Activated CD4-positive, alpha-beta T cell treated with anti-CD3 and anti-CD28 coated beads, Interleukin-2, amount 10 ng/mL, durations not matched to agents 7 days and 5 days (primary cell): ENCODE measurements at regions of chr1 and their contacts with region 1.

Region 1: GRCh38 chr1:206663832-206664652 is 20.7 kb upstream of the MAPKAPK2 start:
- DNase-seq: peak; percentile 78
- H3K4me3 Mint-ChIP-seq: no peak overlapping the region
- H3K27ac Mint-ChIP-seq: no peak overlapping the region
- H3K4me1 Mint-ChIP-seq: peaks cover 21% of the 10 kb centered on the region
- H3K27me3 Mint-ChIP-seq: peaks cover 26% of the 10 kb centered on the region

Region 2: DNA sequence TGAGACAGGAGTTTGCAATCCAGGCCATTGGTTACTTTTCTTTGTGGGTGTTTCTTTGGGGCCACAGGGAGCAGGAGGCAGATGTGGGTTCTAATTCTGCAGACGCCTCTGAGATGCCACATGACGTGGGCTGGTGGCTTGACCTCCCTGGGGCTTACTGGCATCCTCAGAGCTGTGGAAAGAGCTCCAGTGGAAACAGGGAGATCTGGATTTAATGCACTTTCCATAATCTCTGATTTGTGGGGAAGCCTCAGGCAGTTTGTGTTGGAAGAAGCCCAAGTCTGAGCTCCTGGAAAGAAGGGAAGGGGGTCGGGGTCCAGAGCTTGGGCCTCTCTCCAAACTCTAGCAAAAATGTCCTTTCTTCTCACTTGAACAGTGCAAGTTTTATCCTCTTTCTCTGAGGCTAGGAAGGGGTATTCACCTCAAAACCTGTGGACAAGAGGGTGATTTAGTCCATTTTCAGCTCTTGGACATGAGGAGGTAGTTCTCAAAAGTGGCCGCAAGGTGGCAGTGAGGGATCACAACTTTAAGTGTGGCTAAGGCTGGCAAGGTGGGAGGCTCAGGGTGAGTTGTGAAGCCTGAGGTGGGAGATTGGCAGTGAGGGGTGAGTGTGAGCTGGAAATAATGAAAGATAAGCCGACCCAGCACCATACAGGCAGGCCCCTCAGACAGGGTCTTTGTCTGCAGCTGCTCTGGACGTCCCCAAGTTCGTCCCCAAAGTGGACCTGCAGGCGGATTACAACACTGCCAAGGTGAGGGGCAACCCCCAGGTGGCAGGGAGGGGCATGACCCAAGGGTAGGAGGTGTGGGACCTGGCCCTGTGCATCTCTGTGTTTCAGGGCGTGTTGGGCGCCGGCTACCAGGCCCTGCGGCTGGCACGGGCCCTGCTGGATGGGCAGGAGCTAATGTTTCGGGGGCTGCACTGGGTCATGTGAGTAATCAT is 184.6 kb before region 1 on chr1:
- CTCF ChIA-PET with region 1: interaction called, 11 read pairs
- POLR2A ChIA-PET with region 1: no interaction called
- DNase-seq: peak; percentile 72
- H3K4me3 Mint-ChIP-seq: no peak overlapping the region
- H3K27ac Mint-ChIP-seq: peak overlapping the region; percentile 63
- H3K4me1 Mint-ChIP-seq: peaks cover 27% of the 10 kb centered on the region
- H3K27me3 Mint-ChIP-seq: no peaks in the 10 kb centered on the region

Region 3: DNA sequence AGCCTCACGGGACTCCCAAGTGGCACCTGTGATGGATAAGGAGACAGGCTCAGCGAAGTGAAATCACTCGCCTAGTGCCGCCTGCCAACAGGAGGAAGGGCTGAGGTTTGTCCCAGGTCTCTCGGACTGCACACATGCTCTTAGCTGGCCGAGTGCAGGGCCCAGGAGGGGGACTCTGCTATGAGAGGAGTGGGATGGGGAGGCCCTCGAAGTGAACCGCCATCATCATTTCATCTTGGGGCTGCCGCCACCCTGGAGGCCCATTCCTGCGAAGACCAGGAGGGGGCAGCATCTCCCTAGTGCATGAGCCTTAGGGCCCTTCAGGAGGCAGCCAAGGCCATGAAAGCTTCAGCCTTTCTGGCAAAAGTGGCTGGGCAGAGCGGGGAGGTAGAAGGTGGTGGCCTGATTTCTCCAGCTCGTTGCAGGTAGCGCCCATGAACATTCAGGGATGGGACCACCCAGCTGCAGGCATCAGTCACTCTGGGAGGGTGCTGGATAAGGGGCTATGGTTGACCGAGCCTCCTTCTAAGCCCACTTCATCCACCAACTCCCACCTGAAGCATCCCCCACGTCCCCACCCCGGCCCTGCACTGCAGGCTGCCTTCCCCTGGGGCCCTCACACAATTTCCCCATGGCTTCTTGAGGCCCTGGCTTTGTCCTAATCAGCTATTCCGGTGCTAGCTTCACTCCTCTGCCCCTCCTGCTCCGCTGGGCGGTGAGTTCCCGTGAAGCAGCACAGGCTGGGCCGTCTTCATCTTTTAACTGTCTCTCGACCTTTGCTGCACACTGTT is 173.9 kb before region 1 on chr1:
- CTCF ChIA-PET with region 1: interaction called, 11 read pairs
- POLR2A ChIA-PET with region 1: no interaction called
- DNase-seq: peak; percentile 74
- H3K4me3 Mint-ChIP-seq: no peak overlapping the region
- H3K27ac Mint-ChIP-seq: no peak overlapping the region
- H3K4me1 Mint-ChIP-seq: peaks cover 17% of the 10 kb centered on the region
- H3K27me3 Mint-ChIP-seq: no peaks in the 10 kb centered on the region

Region 4: GRCh38 chr1:206635080-206635977 is 28.7 kb before region 1 on chr1 and contains the start of gene DYRK3:
- CTCF ChIA-PET with region 1: interaction called, 45 read pairs
- POLR2A ChIA-PET with region 1: interaction called, 5 read pairs
- DNase-seq: peak; percentile 93
- H3K4me3 Mint-ChIP-seq: peak within 1 kb of the TSS; percentile 75
- H3K27ac Mint-ChIP-seq: peak within 1 kb of the TSS; percentile 89
- H3K4me1 Mint-ChIP-seq: peaks cover 23% of the 10 kb centered on the region
- H3K27me3 Mint-ChIP-seq: peaks cover 11% of the 10 kb centered on the region
- total RNA-seq, gene DYRK3: 4.0 to 4.3 TPM

Region 5: DNA sequence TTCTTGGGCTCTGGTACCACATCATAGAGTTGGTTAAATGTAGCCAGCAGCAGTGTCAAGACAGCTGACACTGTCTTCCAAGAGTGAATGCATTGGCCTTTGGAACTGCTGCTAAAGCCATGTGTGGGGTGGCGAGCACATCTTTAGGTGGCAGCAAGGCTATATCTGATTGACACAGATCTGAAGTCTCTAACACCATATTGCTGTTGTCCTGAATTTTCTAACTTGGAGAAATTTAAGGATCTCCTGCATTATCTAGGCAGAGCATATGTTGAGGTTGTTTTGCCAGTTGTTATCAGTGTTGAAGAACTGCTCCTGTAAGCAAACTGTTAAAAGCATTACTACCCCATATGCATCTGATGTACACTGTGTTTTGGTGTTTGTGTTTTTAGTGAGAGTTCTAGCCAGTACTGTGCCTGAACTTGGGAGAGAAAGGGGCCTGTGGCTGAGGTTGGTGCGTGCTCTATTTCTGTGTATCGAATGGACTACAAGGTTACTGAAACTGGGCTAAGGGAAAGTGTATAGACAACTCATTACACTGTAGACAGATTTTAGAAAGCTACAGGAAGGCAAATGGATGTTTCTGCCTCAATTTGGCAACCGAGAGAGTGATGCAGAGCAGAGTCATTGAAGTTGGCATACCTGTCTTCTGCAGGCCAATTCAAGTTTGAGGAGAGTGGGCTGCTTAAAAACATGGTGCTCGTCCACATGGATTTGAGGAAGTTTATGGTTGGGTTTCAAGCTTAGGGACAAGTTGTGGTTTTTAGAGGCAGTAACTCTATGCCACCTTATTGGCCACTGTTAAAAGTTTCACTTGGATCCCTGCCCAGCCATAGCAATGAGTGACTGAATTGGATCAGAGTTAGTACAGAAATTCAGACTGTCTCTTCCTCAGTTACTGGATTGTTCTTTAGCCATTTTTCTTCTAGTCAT is 11.8 kb before region 1 on chr1:
- CTCF ChIA-PET with region 1: interaction called, 19 read pairs
- POLR2A ChIA-PET with region 1: no interaction called
- DNase-seq: no peak
- H3K4me3 Mint-ChIP-seq: no peak overlapping the region
- H3K27ac Mint-ChIP-seq: no peak overlapping the region
- H3K4me1 Mint-ChIP-seq: no peaks in the 10 kb centered on the region
- H3K27me3 Mint-ChIP-seq: peaks cover under 1% of the 10 kb centered on the region

Region 6: GRCh38 chr1:206674745-206675175 is 10.7 kb after region 1 on chr1:
- CTCF ChIA-PET with region 1: interaction called, 40 read pairs
- POLR2A ChIA-PET with region 1: no interaction called
- DNase-seq: no peak
- H3K4me3 Mint-ChIP-seq: no peak overlapping the region
- H3K27ac Mint-ChIP-seq: peak overlapping the region; percentile 14
- H3K4me1 Mint-ChIP-seq: peaks cover 10% of the 10 kb centered on the region
- H3K27me3 Mint-ChIP-seq: peaks cover 6% of the 10 kb centered on the region

Region 7: DNA sequence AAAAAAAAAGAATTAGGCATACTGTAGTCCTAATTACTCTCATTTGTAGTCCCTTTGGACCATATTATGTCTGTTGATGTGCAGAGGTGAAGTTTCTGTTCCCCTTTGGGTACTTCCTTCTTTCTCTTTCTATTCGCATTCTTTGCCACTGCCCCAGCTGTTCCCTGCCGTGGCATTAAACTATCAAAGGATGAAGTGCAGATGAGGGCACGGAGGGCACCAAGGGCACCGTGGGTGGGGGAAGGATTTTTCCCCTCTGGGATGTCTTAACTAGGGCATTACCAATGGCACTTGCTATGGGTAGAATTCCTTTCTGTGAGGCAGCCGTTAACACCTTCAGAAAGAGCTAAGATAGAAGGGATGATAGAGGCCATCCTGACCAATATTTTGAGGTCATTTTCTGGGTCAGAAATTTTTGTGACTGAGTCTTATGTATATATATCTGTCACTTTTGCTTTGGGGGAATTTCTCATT is 15.7 kb after region 1 on chr1:
- CTCF ChIA-PET with region 1: interaction called, 40 read pairs
- POLR2A ChIA-PET with region 1: no interaction called
- DNase-seq: no peak
- H3K4me3 Mint-ChIP-seq: no peak overlapping the region
- H3K27ac Mint-ChIP-seq: no peak overlapping the region
- H3K4me1 Mint-ChIP-seq: peaks cover 24% of the 10 kb centered on the region
- H3K27me3 Mint-ChIP-seq: peaks cover 5% of the 10 kb centered on the region